ENCODE measurements at regions of chr4 and their contacts with region 1.

Region 1: DNA sequence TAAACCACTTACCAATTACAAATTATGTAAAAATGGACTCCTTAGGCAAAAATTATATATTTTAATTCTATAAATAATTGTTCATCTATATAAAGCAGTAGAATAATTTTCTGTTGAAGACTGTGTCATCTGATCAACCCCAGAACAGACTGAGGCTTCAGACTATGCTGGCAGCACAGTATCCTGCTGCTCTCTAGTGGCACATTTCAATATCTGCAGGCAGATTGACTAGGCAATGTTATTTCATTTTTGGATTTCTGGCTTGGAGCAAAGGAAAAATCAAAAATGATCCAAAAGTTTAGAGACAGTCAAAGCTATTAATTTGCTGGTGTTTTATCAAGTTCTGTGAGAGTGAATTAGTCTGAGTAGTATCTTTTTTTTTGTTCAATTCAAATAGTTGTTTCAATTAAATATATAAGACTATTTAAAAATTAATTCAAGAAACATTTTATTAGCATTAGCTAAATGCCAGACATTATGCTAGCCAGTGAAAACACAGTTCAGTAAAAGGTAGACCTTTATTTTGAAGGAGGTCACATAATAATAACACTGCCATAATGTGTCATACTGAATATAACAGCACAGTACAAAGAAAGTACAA is 21.3 kb upstream of the SULT1E1 start:
- DNase-seq: peak; percentile 41 to 48
- H3K4me3 ChIP-seq: no peak overlapping the region
- H3K4me3 Mint-ChIP-seq: no peak overlapping the region
- H3K27ac Mint-ChIP-seq: no peak overlapping the region
- H3K4me1 ChIP-seq: no peaks in the 10 kb centered on the region; the same call in 1 of the 2 replicates
- H3K4me1 Mint-ChIP-seq: peaks cover 13% of the 10 kb centered on the region
- H3K27me3 ChIP-seq: no peaks in the 10 kb centered on the region
- H3K27me3 Mint-ChIP-seq: no peaks in the 10 kb centered on the region
- CTCF ChIP-seq: peak; percentile 75 to 80

Region 2: DNA sequence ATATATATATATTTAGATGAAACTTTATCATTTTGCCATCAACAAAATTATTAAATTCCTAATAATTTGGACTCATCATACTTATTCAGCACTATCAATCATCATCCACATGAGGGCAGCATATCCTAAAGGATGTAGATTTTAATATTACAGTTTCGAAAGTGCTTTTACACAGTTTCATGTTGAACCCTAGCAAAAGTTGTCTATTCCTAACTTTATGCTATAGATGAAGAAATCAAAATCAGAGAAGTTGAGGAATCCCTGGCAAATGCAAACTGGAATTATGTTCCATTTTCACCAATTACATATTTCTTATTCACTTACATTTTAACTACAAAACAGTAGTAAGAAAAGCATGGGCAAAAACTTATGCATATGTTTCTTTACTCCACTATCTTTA is 191.7 kb before region 1 on chr4:
- CTCF ChIA-PET with region 1: interaction called, 3 read pairs
- POLR2A ChIA-PET with region 1: no interaction called
- intact Hi-C with region 1: loop called (anchors 1 kb)
- DNase-seq: peak in 1 of 2 experiments; percentile 37
- H3K4me3 ChIP-seq: no peak overlapping the region
- H3K4me3 Mint-ChIP-seq: no peak overlapping the region
- H3K27ac Mint-ChIP-seq: no peak overlapping the region
- H3K4me1 ChIP-seq: peaks cover 11% of the 10 kb centered on the region; the same call in 1 of the 2 replicates
- H3K4me1 Mint-ChIP-seq: peaks cover 6% of the 10 kb centered on the region
- H3K27me3 ChIP-seq: no peaks in the 10 kb centered on the region
- H3K27me3 Mint-ChIP-seq: no peaks in the 10 kb centered on the region
- CTCF ChIP-seq: peak; percentile 47 to 71

Region 3: DNA sequence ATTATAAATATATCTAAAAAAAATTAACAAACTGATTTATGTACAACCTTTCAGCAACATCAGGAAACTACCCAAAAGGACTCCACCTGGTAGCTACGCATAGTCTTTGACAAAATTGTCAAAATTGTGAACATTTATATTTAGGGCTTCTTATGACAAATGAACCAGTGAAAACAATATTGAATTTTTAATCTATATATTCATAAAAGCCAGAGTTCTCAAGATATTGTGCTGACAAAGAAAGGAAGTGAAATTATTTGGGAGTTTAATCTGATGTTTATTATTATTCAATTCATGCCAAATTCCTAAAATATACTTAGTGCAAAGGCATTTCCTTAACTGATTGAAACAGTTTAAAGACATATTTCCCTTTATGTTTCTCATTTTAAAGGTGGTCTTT is 115.5 kb before region 1 on chr4:
- CTCF ChIA-PET with region 1: no interaction called
- POLR2A ChIA-PET with region 1: no interaction called
- intact Hi-C with region 1: loop called (anchors 5 kb)
- DNase-seq: no peak
- H3K4me3 ChIP-seq: no peak overlapping the region
- H3K4me3 Mint-ChIP-seq: no peak overlapping the region
- H3K27ac Mint-ChIP-seq: no peak overlapping the region
- H3K4me1 ChIP-seq: no peaks in the 10 kb centered on the region
- H3K4me1 Mint-ChIP-seq: no peaks in the 10 kb centered on the region
- H3K27me3 ChIP-seq: no peaks in the 10 kb centered on the region
- H3K27me3 Mint-ChIP-seq: no peaks in the 10 kb centered on the region
- CTCF ChIP-seq: no peak

Region 4: DNA sequence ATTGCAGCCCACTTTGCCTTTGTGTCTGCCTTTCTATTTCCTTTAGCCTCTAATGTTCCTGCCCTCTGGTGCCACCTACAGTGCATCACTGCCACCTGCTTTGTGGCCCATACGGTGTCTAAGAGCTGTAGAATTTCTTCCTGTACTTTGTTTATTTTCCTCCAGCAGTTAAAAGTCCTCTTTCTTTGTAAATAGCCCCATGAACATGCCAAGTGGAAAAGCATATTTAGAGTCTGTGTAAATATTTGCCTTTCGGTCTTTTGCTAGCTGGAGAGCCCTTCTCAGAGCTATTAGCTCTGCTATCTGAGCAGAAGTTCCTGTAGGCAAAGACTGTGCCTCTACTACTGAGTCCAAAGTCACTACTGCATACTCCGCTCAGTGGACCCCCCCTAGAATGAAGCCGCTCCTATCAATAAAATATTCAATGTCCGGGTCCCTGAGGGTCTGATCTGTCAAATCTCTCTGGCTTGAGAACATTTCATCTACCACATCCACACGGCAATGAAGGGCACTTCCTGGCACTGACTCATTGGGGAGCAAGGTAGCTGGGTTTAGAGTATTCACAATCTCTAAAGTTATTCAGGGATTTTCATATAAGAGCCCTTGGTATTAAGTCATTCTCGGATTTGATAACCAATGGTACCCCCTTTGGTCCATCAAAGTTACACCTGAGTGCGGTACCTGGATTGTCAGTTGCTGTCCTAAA is 57.6 kb before region 1 on chr4:
- CTCF ChIA-PET with region 1: interaction called, 9 read pairs
- POLR2A ChIA-PET with region 1: no interaction called
- intact Hi-C with region 1: loop called (anchors 1 kb)
- DNase-seq: peak; percentile 76 to 82
- H3K4me3 ChIP-seq: no peak overlapping the region
- H3K4me3 Mint-ChIP-seq: no peak overlapping the region
- H3K27ac Mint-ChIP-seq: peak overlapping the region; percentile 75
- H3K4me1 ChIP-seq: peaks cover 23% of the 10 kb centered on the region
- H3K4me1 Mint-ChIP-seq: peaks cover 6% of the 10 kb centered on the region
- H3K27me3 ChIP-seq: no peaks in the 10 kb centered on the region
- H3K27me3 Mint-ChIP-seq: no peaks in the 10 kb centered on the region
- CTCF ChIP-seq: peak; percentile 56 to 73

Region 5: GRCh38 chr4:69830560-69831289 is 50.5 kb before region 1 on chr4:
- CTCF ChIA-PET with region 1: interaction called, 8 read pairs
- POLR2A ChIA-PET with region 1: no interaction called
- intact Hi-C with region 1: loop called (anchors 1 kb)
- DNase-seq: peak; percentile 67 to 80
- H3K4me3 ChIP-seq: peak overlapping the region; percentile 41
- H3K4me3 Mint-ChIP-seq: peak overlapping the region; percentile 78
- H3K27ac Mint-ChIP-seq: peak overlapping the region; percentile 80
- H3K4me1 ChIP-seq: peaks cover 47% of the 10 kb centered on the region
- H3K4me1 Mint-ChIP-seq: peaks cover 13% of the 10 kb centered on the region
- H3K27me3 ChIP-seq: no peaks in the 10 kb centered on the region
- H3K27me3 Mint-ChIP-seq: no peaks in the 10 kb centered on the region
- CTCF ChIP-seq: peak; percentile 34 to 40

Region 6: GRCh38 chr4:70269674-70270073 is 388.4 kb after region 1 on chr4:
- CTCF ChIA-PET with region 1: no interaction called
- POLR2A ChIA-PET with region 1: no interaction called
- intact Hi-C with region 1: loop called (anchors 5 kb)
- DNase-seq: peak in 1 of 2 experiments; percentile 1
- H3K4me3 ChIP-seq: no peak overlapping the region
- H3K4me3 Mint-ChIP-seq: no peak overlapping the region
- H3K27ac Mint-ChIP-seq: no peak overlapping the region
- H3K4me1 ChIP-seq: no peaks in the 10 kb centered on the region
- H3K4me1 Mint-ChIP-seq: no peaks in the 10 kb centered on the region
- H3K27me3 ChIP-seq: no peaks in the 10 kb centered on the region
- H3K27me3 Mint-ChIP-seq: no peaks in the 10 kb centered on the region
- CTCF ChIP-seq: peak in 1 of 2 experiments; percentile 15

Region 7: DNA sequence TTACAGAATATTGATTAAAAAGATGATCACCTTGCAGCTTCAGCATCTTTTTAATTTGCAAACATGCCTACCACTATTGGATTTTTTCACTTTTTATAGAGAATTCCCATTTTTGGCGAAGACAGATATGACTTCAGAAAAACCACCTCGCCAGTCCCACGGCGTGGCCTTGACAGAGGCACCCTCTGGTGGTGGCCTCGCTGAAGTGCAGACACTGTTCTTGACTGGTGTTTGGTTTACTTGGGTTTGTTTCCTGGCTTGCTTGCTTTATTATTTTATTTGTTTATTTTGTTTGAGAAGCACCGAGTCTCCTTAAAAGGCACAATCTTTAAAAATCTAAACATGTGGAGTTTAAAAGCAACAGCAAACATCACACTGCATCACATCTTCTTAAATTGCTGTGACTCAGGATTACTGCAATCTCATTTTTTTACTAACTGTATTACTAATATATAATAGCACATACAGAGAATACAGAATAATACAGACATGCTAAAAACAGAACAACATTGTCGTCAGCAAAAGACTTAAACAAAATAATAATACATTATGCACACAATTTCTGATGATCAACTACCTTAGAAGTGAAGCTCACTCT is 624.0 kb after region 1 on chr4:
- CTCF ChIA-PET with region 1: no interaction called
- POLR2A ChIA-PET with region 1: no interaction called
- intact Hi-C with region 1: loop called (anchors 1 kb)
- DNase-seq: peak; percentile 43 to 71
- H3K4me3 ChIP-seq: no peak overlapping the region
- H3K4me3 Mint-ChIP-seq: no peak overlapping the region
- H3K27ac Mint-ChIP-seq: no peak overlapping the region
- H3K4me1 ChIP-seq: no peaks in the 10 kb centered on the region
- H3K4me1 Mint-ChIP-seq: no peaks in the 10 kb centered on the region
- H3K27me3 ChIP-seq: no peaks in the 10 kb centered on the region
- H3K27me3 Mint-ChIP-seq: no peaks in the 10 kb centered on the region
- CTCF ChIP-seq: peak; percentile 86 to 94